PC-3 (cell line): ENCODE measurements at regions of chr1 and their contacts with region 1.

Region 1: GRCh38 chr1:200272481-200273068 is 137.3 kb downstream of the ZNF281 start:
- DNase-seq: no peak
- ATAC-seq: no peak
- H3K4me3 ChIP-seq: no peak overlapping the region
- H3K27ac ChIP-seq: no peak overlapping the region
- H3K4me1 ChIP-seq: no peaks in the 10 kb centered on the region
- H3K27me3 ChIP-seq: no peaks in the 10 kb centered on the region
- CTCF ChIP-seq: no peak

Region 2: GRCh38 chr1:200355801-200356200 is 83.2 kb after region 1 on chr1:
- CTCF ChIA-PET with region 1: no interaction called
- POLR2A ChIA-PET with region 1: interaction called, 16 read pairs
- intact Hi-C with region 1: no loop called
- DNase-seq: no peak
- ATAC-seq: no peak
- H3K4me3 ChIP-seq: no peak overlapping the region
- H3K27ac ChIP-seq: no peak overlapping the region
- H3K4me1 ChIP-seq: peaks cover 14% of the 10 kb centered on the region
- H3K27me3 ChIP-seq: no peaks in the 10 kb centered on the region
- CTCF ChIP-seq: no peak